Naive thymus-derived CD4-positive, alpha-beta T cell (primary cell): ENCODE measurements at regions of chr6 and their contacts with region 1.

Region 1: DNA sequence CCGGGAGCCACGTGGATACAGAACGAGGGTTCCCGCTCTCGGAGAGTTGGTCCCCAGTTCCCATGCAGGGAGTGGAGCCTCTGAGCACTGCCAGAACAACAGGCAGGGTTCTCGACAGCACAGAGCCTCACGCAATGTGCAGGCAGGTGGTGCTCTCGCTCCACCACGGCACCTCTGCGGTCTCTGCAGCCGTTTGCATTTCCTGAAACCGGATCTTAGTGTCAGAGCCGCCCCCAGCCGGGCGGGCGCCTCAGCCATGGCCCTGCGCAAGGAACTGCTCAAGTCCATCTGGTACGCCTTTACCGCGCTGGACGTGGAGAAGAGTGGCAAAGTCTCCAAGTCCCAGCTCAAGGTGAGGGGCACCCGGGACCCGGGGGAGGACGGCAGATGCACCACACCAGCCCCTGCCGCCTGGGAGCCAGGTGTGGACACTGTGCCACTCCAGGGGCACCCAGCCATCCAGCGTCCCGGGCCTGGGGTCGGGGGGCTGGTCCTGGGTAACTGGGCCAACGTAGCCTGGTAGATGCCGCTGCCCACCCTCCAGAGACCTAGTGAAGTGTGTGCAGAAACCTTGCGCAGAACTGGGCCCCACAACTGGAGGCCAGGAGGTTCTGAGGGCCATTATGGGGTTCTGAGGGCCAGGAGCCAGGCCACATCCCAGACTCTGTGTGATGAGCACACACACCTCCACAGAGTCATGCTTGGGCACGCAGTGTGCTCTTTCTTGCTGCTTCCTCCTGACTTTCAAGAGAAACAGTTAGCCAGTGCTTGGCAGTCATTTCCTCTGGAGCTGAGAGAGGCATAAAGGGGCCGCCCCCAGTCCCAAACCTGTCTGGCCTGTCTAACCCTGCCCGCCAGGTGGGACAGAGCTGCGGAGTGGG is at the start of gene DEF6:
- DNase-seq: peak; percentile 64 to 89 (median 84)
- ATAC-seq: peak; percentile 91
- H3K4me3 ChIP-seq: peak within 1 kb of the TSS; percentile 95
- H3K4me3 Mint-ChIP-seq: peak within 1 kb of the TSS; percentile 84 to 100 (median 90)
- H3K27ac ChIP-seq: peak within 1 kb of the TSS; percentile 91
- H3K27ac Mint-ChIP-seq: peak within 1 kb of the TSS; percentile 83 to 100 (median 98)
- H3K4me1 ChIP-seq: peaks cover 33 to 46% of the 10 kb centered on the region in 2 donors
- H3K4me1 Mint-ChIP-seq: peaks cover 27 to 53% (median 45%) of the 10 kb centered on the region in 7 donors
- H3K27me3 ChIP-seq: no peaks in the 10 kb centered on the region
- H3K27me3 Mint-ChIP-seq: no peaks in the 10 kb centered on the region
- total RNA-seq, gene DEF6: 219 to 250 (median 225) TPM

Region 2: DNA sequence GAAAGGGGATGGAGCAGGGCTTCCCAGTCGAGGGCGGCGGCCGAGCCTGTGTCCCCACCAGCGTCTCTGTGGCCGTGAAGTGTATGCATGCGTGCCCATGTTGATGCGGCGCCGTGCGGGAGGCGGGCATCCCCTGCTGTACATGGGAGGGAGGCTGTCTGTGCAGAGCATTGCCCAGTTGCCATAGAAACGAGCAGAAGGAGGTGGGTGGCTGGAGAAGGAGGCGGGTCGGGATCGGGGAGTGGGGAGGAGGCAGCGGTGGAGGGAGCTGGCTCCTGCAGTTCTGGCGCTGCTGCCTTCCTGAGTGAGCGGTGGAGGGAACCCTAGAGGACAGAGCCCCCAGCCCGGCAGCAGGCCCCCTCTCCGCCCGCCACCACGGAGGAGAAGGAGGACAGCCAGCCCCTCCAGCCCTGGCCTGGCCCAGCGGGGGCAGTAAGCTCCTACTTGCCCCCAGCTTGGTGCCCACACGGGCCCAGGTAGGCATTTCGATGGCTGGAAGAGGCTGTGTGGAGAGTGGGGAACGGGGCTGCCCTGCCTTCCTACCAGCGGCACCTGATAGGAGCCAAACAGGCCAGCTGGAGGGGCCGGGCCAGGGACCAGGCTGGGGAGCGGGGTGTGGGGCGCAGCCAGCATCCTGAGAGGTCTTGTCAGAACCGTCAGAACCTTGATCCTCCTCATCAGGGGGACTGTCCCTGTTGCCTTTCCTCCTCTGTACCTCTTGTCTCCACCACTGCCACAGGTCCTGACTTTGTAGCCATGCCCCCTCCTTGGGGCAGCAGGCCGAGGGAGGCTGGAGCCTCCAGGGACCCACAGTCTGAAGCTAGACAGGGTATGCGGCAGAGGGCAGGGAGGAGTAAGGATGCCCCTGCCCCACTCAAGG is 783.0 kb before region 1 on chr6:
- CTCF ChIA-PET with region 1: no interaction called
- POLR2A ChIA-PET with region 1: no interaction called
- intact Hi-C with region 1: no loop called
- DNase-seq: no peak
- ATAC-seq: no peak
- H3K4me3 ChIP-seq: no peak overlapping the region
- H3K4me3 Mint-ChIP-seq: no peak overlapping the region
- H3K27ac ChIP-seq: no peak overlapping the region
- H3K27ac Mint-ChIP-seq: no peak overlapping the region
- H3K4me1 ChIP-seq: no peaks in the 10 kb centered on the region
- H3K4me1 Mint-ChIP-seq: peaks cover 0 to 3% (median 0%) of the 10 kb centered on the region in 7 donors
- H3K27me3 ChIP-seq: no peaks in the 10 kb centered on the region
- H3K27me3 Mint-ChIP-seq: peaks cover 0 to 15% (median 5%) of the 10 kb centered on the region in 5 donors

Region 3: DNA sequence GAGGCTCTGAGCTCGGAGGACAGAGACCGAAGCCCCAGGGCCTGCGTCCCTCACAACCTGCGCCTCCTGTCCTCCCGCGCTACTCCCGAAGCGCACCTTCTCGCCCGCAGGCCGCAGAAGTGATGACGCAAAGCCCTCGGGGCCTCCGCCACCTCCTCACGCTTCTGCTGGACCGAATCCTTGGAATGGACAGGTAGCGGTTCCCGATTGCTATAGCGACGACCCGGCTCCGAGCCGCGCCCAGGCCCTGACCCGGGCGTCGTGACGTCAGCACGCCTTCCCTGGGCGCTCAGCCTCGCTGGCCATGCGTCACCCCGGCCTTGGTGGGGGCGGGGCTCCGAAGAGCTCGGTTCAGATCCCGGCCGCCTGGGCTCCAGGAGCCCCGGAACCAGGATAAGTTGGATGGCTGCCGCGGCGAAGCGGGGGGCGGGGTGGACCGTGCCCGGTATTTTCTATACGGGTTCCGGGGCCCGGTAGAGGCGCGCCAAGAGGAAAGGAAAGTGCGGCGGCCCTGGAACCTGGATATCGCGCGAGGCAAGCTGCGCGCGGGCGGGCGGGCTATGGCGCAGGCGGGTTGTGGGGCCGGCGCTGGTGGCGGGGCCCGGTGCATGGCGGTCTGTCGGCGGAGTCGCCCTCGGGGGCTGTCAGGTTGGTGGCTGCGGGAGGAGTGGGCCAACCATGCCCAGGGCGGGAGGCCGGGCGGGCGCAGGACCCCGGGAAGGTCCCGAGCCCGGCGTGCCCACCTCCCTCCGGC is 38.5 kb before region 1 on chr6 and contains the start of gene ZNF76:
- CTCF ChIA-PET with region 1: interaction called, 5 read pairs
- POLR2A ChIA-PET with region 1: interaction called, 5 read pairs
- intact Hi-C with region 1: loop called (anchors 1 to 2 kb)
- DNase-seq: peak; percentile 89 to 93 (median 92)
- ATAC-seq: peak; percentile 88
- H3K4me3 ChIP-seq: peak within 1 kb of the TSS; percentile 65
- H3K4me3 Mint-ChIP-seq: peak within 1 kb of the TSS; percentile 85 to 99 (median 97)
- H3K27ac ChIP-seq: peak within 1 kb of the TSS; percentile 95
- H3K27ac Mint-ChIP-seq: peak within 1 kb of the TSS; percentile 89 to 99 (median 97)
- H3K4me1 ChIP-seq: peaks cover 15 to 17% of the 10 kb centered on the region in 2 donors
- H3K4me1 Mint-ChIP-seq: peaks cover 37 to 64% (median 50%) of the 10 kb centered on the region in 7 donors
- H3K27me3 ChIP-seq: no peaks in the 10 kb centered on the region
- H3K27me3 Mint-ChIP-seq: no peaks in the 10 kb centered on the region
- total RNA-seq, gene ZNF76: 44.4 to 110 (median 77.2) TPM

Region 4: DNA sequence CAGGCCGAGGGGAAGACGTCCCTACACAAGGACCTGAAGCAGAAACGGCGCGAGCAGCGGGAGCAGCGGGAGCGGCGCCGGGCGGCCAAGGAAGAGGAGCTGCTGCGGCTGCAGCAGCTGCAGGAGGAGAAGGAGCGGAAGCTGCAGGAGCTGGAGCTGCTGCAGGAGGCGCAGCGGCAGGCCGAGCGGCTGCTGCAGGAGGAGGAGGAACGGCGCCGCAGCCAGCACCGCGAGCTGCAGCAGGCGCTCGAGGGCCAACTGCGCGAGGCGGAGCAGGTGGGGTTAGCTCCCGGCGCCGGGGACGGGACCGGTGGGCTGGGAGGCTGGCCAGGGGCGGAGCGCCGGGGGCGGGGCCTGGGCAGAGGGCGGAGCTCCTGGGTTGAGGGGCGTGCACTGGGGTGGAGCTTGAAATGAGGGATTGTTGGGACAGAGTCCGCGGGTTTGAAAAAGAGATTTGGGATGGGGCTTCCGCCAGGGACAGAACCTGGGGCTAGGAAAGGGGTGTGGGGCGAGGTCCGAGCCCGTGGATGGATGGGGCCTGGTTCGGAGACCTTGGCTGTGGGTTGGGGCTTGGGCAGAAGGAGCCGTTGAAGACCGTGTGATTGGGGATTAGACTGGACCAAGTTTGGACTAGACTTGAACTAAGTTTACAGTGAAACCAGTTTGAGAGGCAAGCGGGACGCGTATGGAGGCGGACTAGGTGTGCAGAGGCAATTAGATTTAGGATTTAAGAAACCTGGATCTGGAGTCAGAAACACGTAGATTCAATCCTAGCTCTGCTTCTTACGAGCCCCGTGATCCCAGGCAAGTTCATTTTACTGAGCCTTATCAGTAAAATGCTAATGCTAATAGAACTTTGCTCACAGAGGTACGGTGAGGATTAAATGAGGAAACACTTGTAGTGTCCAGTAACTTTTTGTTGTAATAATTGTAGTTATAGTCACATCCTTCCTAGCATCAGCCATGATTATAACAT is 20.6 kb after region 1 on chr6:
- CTCF ChIA-PET with region 1: interaction called, 346 read pairs
- POLR2A ChIA-PET with region 1: interaction called, 318 read pairs
- intact Hi-C with region 1: loop called in 1 of 2 experiments (anchors 2 kb)
- DNase-seq: no peak
- ATAC-seq: no peak
- H3K4me3 ChIP-seq: no peak overlapping the region
- H3K4me3 Mint-ChIP-seq: no peak overlapping the region
- H3K27ac ChIP-seq: no peak overlapping the region
- H3K27ac Mint-ChIP-seq: peak overlapping the region in 7 of 9 donors; percentile 36 to 99 (median 56)
- H3K4me1 ChIP-seq: peaks cover 13 to 24% of the 10 kb centered on the region in 2 donors
- H3K4me1 Mint-ChIP-seq: peaks cover 32 to 69% (median 57%) of the 10 kb centered on the region in 7 donors
- H3K27me3 ChIP-seq: no peaks in the 10 kb centered on the region
- H3K27me3 Mint-ChIP-seq: no peaks in the 10 kb centered on the region

Region 5: DNA sequence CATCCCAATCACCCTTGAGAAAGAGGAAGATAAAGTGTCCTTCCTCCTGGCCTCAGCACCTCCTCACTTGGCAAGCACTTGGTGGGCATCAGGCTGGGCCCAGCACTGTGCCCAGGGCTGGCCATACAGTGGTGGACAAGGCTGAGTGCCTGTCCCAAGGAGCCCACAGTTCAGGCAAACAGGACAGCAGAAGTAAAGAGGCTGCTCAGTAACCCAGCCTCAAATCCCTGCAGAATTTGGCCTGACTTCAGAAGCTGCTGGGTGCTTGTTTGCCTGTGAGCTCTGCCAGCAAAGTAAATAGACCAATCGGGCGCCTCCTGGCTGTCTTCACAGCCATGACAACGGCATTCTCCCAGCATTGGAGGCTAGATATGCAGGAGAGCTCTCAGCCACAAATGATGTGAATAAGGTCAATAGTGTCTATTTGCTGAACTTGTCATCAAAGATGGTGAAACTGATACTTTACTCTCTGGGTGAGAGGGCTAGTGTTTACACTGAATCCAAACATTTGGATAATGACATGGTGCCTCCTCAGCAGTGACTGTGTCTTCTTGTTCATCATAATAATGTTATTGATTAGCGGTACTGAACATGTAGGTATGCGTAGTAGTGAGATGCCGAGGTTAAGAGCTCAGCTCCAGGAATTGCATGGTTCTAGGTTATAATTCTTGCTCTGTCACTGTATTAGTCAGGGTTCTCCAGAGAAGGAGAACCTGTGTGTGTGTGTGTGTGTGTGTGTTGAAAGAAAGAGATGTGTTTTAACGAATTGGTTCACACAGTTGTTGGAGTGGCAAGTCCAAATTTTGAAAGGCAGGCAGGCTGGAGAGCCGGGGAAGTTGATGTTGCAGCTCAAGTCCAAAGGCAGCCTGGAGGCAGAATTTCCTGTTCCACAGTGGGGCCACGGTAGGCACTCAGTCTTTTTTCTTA is 117.5 kb after region 1 on chr6:
- CTCF ChIA-PET with region 1: interaction called, 3 read pairs
- POLR2A ChIA-PET with region 1: interaction called, 3 read pairs
- intact Hi-C with region 1: loop called in 1 of 2 experiments (anchors 1 kb)
- DNase-seq: peak in 3 of 9 donors; percentile 23 to 26 (median 25)
- ATAC-seq: peak; percentile 53
- H3K4me3 ChIP-seq: no peak overlapping the region
- H3K4me3 Mint-ChIP-seq: peak overlapping the region in 2 of 10 donors; percentile 37 to 40
- H3K27ac ChIP-seq: no peak overlapping the region
- H3K27ac Mint-ChIP-seq: peak overlapping the region; percentile 5 to 84 (median 71)
- H3K4me1 ChIP-seq: peaks cover 0 to 44% of the 10 kb centered on the region in 2 donors
- H3K4me1 Mint-ChIP-seq: peaks cover 33 to 73% (median 67%) of the 10 kb centered on the region in 7 donors
- H3K27me3 ChIP-seq: no peaks in the 10 kb centered on the region
- H3K27me3 Mint-ChIP-seq: no peaks in the 10 kb centered on the region

Region 6: DNA sequence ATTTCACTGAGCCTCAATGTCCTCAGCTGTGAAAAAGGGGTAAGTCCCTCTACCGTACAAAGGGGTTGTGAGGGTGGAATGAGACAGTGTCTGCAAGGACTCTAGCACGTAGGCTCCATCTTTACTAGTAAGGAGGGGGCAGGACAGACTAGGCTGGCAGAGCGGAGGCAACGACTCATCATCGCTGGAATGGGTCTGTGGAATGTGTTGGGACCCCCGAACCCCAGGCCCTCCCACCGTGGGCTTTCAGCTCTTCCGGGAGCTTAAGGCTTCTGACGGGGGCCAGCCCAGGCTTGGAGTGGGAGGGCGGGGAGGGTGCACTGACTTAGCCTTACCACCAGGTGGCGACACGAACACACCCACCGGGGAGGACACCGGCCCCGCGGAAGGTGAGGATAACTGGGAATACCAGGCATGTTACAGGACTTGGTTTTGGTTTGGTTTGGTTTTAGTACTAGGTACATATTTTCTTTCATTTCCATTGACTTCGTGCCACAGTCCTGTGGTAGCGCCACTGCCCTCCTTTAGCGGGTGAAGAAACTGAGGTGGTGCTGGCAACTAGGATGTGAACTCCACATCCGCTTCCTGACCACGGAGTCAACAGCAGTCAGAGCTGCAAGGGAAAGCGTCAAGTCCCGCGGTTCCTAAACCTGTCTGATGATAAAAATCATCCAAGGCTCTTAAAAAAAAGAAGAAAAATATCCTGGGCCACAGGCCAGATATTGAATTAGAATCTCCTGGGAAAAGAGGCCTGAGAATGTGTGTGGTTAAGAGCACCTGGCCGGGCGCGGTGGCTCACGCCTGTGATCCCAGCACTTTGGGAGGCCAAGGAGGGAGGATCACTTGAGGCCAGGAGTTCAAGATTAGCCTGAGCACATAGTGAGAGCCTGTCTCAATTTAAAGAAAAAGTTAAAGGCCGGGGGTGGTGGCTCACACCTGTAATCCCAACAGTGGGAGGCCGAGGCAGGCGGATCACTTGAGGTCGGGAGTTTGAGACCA is 225.1 kb after region 1 on chr6:
- CTCF ChIA-PET with region 1: interaction called, 4 read pairs
- POLR2A ChIA-PET with region 1: no interaction called
- intact Hi-C with region 1: loop called in 1 of 2 experiments (anchors 1 kb)
- DNase-seq: peak; percentile 61 to 82 (median 74)
- ATAC-seq: peak; percentile 89
- H3K4me3 ChIP-seq: no peak overlapping the region
- H3K4me3 Mint-ChIP-seq: peak overlapping the region; percentile 56 to 84 (median 76)
- H3K27ac ChIP-seq: peak overlapping the region; percentile 53
- H3K27ac Mint-ChIP-seq: peak overlapping the region; percentile 53 to 91 (median 77)
- H3K4me1 ChIP-seq: peaks cover 9 to 19% of the 10 kb centered on the region in 2 donors
- H3K4me1 Mint-ChIP-seq: peaks cover 9 to 32% (median 26%) of the 10 kb centered on the region in 7 donors
- H3K27me3 ChIP-seq: no peaks in the 10 kb centered on the region
- H3K27me3 Mint-ChIP-seq: peaks cover 0 to 2% (median 0%) of the 10 kb centered on the region in 5 donors

Region 7: DNA sequence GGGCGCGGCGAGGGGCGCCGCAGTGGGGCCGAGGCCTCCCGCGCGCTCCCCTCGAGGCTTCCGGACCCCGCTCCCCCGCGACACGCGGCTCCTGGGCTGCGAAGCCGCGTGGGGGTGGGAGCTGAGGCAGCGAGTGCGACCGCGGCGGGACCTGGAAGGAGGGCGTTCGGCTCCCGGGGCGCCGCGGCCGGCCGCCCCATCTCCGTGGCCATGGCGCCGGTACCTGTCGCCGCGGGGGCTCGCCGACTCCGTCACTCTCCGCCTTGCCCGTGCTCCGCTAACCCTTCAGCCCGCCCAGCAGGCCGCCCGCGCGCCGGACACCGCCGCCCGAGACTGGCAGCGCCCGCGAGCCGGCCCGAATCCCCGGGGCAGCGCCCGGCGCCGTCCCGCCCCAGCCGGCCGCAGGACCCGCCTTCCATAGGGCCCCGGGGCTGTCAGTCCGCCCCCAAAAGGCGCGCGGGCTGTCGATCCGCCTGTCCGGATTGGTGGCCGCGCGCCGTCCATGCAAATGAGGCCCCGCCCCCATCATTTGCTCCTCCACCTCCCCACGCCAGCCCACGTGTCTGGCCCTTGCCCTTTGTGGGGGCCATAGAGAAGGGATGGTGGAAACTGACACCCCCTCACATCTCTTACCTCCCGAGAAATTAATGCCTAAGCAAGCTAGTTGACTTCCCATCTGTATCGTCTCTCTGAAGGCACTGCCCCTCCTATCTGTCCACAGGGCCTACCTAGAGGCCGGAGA is 390.9 kb after region 1 on chr6 and contains the start of gene FKBP5:
- CTCF ChIA-PET with region 1: no interaction called
- POLR2A ChIA-PET with region 1: no interaction called
- intact Hi-C with region 1: loop called in 1 of 2 experiments (anchors 2 kb)
- DNase-seq: peak; percentile 76 to 92 (median 82)
- ATAC-seq: peak; percentile 96
- H3K4me3 ChIP-seq: peak within 1 kb of the TSS; percentile 99
- H3K4me3 Mint-ChIP-seq: peak within 1 kb of the TSS; percentile 90 to 100 (median 97)
- H3K27ac ChIP-seq: peak within 1 kb of the TSS; percentile 92
- H3K27ac Mint-ChIP-seq: peak within 1 kb of the TSS; percentile 89 to 98 (median 95)
- H3K4me1 ChIP-seq: peaks cover 5 to 13% of the 10 kb centered on the region in 2 donors
- H3K4me1 Mint-ChIP-seq: peaks cover 6 to 18% (median 15%) of the 10 kb centered on the region in 7 donors
- H3K27me3 ChIP-seq: no peaks in the 10 kb centered on the region
- H3K27me3 Mint-ChIP-seq: no peaks in the 10 kb centered on the region
- total RNA-seq, gene FKBP5: 56.7 to 83.3 (median 79.4) TPM

Region 8: DNA sequence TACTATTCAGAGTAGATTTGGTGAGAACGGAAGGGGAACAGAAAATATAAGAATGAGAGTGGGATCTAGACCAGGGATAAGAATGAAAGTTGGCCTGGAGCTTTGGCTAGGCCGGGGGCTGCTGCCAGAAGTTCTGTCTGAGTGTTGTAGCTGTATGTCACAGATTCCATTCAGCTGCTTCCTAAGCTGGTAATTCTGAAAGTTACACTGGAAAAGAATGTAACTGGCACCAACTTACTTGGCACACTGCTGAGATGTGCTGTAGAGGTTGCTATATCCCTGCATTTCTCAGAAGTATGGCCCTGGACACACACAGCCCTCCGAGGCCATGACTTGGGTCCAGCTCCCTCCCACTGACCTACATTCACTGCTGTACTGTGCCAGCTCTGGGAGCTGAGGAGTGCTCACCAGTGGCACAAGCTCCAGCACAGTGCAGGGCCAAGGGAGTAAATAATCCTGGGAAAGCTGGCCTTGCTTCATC is 1985.9 kb after region 1 on chr6:
- CTCF ChIA-PET with region 1: no interaction called
- POLR2A ChIA-PET with region 1: no interaction called
- intact Hi-C with region 1: no loop called
- DNase-seq: no peak
- ATAC-seq: no peak
- H3K4me3 ChIP-seq: no peak overlapping the region
- H3K4me3 Mint-ChIP-seq: peak overlapping the region in 2 of 10 donors; percentile 20 to 25
- H3K27ac ChIP-seq: no peak overlapping the region
- H3K27ac Mint-ChIP-seq: no peak overlapping the region
- H3K4me1 ChIP-seq: no peaks in the 10 kb centered on the region
- H3K4me1 Mint-ChIP-seq: peaks cover 5 to 69% (median 12%) of the 10 kb centered on the region in 7 donors
- H3K27me3 ChIP-seq: no peaks in the 10 kb centered on the region
- H3K27me3 Mint-ChIP-seq: no peaks in the 10 kb centered on the region